WTC11 (cell line): ENCODE measurements at regions of chr14 and their contacts with region 1.

Region 1: DNA sequence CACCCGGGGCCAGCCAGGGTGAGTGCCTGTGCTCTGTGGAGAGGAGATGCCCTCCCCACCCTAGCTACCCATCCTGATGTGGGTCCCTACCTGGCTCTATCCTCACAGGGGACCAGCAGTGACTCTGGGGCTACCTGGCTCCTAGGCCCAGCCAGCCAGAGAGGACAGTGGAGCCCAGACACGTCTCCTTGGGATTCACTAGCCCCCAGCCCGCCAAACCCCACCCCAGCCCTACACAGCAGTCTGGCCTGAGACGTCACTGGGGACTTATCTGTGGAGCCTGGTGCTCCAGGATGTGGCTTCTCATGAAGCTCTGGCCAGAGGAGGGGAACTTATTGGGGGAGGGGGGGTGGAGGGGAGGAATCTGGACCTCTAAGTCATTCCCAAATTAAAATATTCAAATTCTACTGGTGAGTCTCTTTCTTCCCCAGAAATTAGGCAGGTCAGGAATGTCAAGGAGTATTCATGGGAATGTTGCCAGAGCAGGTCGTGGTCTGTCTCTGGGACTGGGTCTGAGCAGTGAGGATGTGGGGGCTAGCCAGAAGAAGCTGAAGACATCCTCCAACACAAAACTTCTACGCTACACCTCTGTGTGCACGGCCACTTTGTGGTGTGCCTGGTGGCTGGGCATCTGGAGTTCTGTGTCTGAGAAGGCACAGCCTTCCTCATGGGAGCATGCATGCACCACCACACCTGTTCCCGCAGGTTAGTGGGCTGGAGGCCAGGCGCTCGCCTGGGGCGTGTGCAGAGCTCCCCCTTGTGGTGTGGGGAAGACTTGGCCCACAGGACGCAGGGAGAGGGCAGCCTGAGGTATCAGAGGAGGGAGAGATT is 2.7 kb downstream of the CMTM5 start:
- DNase-seq: peak; percentile 76
- ATAC-seq: peak; percentile 63
- H3K4me3 Mint-ChIP-seq: no peak overlapping the region
- H3K27ac Mint-ChIP-seq: no peak overlapping the region
- H3K4me1 Mint-ChIP-seq: peaks cover 11% of the 10 kb centered on the region
- H3K27me3 Mint-ChIP-seq: peaks cover 59% of the 10 kb centered on the region
- CTCF ChIP-seq: peak; percentile 93

Region 2: GRCh38 chr14:23306410-23307145 is 73.0 kb before region 1 on chr14 and contains the start of gene BCL2L2:
- CTCF ChIA-PET with region 1: interaction called, 18 read pairs
- POLR2A ChIA-PET with region 1: interaction called, 3 read pairs
- DNase-seq: peak; percentile 94
- ATAC-seq: peak; percentile 69
- H3K4me3 Mint-ChIP-seq: peak within 1 kb of the TSS; percentile 87
- H3K27ac Mint-ChIP-seq: peak within 1 kb of the TSS; percentile 93
- H3K4me1 Mint-ChIP-seq: peaks cover 20% of the 10 kb centered on the region
- H3K27me3 Mint-ChIP-seq: peaks cover 18% of the 10 kb centered on the region
- CTCF ChIP-seq: no peak
- total RNA-seq, gene BCL2L2: 15.5 to 18.2 TPM (median 16.9 TPM) in 3 replicates

Region 3: GRCh38 chr14:23345987-23346692 is 33.4 kb before region 1 on chr14:
- CTCF ChIA-PET with region 1: interaction called, 34 read pairs
- POLR2A ChIA-PET with region 1: no interaction called
- DNase-seq: no peak
- ATAC-seq: peak; percentile 65
- H3K4me3 Mint-ChIP-seq: no peak overlapping the region
- H3K27ac Mint-ChIP-seq: no peak overlapping the region
- H3K4me1 Mint-ChIP-seq: peaks cover 13% of the 10 kb centered on the region
- H3K27me3 Mint-ChIP-seq: peaks cover 23% of the 10 kb centered on the region
- CTCF ChIP-seq: no peak

Region 4: GRCh38 chr14:23392613-23393012 is 13.0 kb after region 1 on chr14:
- CTCF ChIA-PET with region 1: interaction called, 27 read pairs
- POLR2A ChIA-PET with region 1: interaction called, 4 read pairs
- DNase-seq: no peak
- ATAC-seq: peak; percentile 65
- H3K4me3 Mint-ChIP-seq: no peak overlapping the region
- H3K27ac Mint-ChIP-seq: no peak overlapping the region
- H3K4me1 Mint-ChIP-seq: peaks cover 17% of the 10 kb centered on the region
- H3K27me3 Mint-ChIP-seq: peaks cover 30% of the 10 kb centered on the region
- CTCF ChIP-seq: no peak

Region 5: GRCh38 chr14:23442721-23443356 is 63.3 kb after region 1 on chr14:
- CTCF ChIA-PET with region 1: interaction called, 12 read pairs
- POLR2A ChIA-PET with region 1: no interaction called
- DNase-seq: no peak
- ATAC-seq: peak; percentile 74
- H3K4me3 Mint-ChIP-seq: no peak overlapping the region
- H3K27ac Mint-ChIP-seq: no peak overlapping the region
- H3K4me1 Mint-ChIP-seq: peaks cover 22% of the 10 kb centered on the region
- H3K27me3 Mint-ChIP-seq: peaks cover 21% of the 10 kb centered on the region
- CTCF ChIP-seq: no peak

Region 6: GRCh38 chr14:23551164-23551949 is 171.8 kb after region 1 on chr14 and contains the start of gene ZFHX2:
- CTCF ChIA-PET with region 1: no interaction called
- POLR2A ChIA-PET with region 1: no interaction called
- DNase-seq: peak; percentile 94
- ATAC-seq: peak; percentile 63
- H3K4me3 Mint-ChIP-seq: no peak within 1 kb of the TSS
- H3K27ac Mint-ChIP-seq: peak within 1 kb of the TSS; percentile 85
- H3K4me1 Mint-ChIP-seq: peaks cover 9% of the 10 kb centered on the region
- H3K27me3 Mint-ChIP-seq: no peaks in the 10 kb centered on the region
- CTCF ChIP-seq: no peak
- total RNA-seq, gene ZFHX2: 16.4 to 26.2 TPM (median 25.7 TPM) in 3 replicates

Region 7: DNA sequence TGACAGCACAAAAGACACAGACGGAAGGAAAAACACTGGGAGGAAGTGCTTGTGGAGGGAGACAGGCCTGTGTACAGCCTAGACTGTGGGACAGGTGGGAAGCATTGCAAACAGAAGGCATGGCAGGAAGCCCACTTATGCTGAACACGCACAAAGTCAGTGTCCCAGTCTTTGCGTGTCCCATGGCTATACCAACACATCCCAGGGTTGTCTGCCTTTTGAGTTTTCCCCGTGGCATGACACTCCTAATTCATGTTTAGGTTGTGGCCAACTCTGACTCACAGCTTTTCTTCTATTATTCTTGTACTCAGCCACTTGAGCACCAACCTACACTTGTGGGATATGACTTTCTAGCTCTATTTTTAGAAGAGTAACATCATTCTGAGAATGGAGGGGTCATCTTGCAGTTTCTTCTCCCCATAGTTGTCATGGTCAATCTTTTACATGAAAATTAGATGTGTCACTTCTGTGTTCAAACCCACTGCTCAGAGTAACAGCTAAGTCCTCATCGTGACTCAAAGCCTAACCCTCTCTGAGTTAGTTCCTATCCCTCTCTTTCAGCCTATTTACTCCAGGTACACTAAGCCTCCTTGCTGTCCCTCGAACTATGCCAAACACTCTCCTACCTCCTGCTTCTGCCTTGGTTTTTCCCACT is 226.5 kb after region 1 on chr14:
- CTCF ChIA-PET with region 1: no interaction called
- POLR2A ChIA-PET with region 1: no interaction called
- DNase-seq: no peak
- ATAC-seq: no peak
- H3K4me3 Mint-ChIP-seq: no peak overlapping the region
- H3K27ac Mint-ChIP-seq: no peak overlapping the region
- H3K4me1 Mint-ChIP-seq: no peaks in the 10 kb centered on the region
- H3K27me3 Mint-ChIP-seq: peaks cover 19% of the 10 kb centered on the region
- CTCF ChIP-seq: no peak